H1 (cell line): ENCODE measurements at regions of chr19 and their contacts with region 1.

Region 1: GRCh38 chr19:12965017-12965811 is 4.2 kb upstream of the DAND5 start:
- DNase-seq: peak; percentile 59 to 97
- H3K4me3 ChIP-seq: peak overlapping the region in 3 of 4 experiments; percentile 27 to 54 (median 46); a peak in 5 of 8 replicates
- H3K27ac ChIP-seq: peak overlapping the region; percentile 34; the same call in 1 of the 2 replicates
- H3K4me1 ChIP-seq: peaks cover 0 to 6% (median 2%) of the 10 kb centered on the region in 4 experiments; a peak in 2 of 7 replicates
- H3K27me3 ChIP-seq: no peaks in the 10 kb centered on the region
- CTCF ChIP-seq: peak; percentile 92 to 99 (median 99)
- EP300 ChIP-seq: no peak
- POLR2A ChIP-seq: no peak; a peak in 1 of 3 replicates
- RAD21 ChIP-seq: peak; percentile 54 to 65

Region 2: DNA sequence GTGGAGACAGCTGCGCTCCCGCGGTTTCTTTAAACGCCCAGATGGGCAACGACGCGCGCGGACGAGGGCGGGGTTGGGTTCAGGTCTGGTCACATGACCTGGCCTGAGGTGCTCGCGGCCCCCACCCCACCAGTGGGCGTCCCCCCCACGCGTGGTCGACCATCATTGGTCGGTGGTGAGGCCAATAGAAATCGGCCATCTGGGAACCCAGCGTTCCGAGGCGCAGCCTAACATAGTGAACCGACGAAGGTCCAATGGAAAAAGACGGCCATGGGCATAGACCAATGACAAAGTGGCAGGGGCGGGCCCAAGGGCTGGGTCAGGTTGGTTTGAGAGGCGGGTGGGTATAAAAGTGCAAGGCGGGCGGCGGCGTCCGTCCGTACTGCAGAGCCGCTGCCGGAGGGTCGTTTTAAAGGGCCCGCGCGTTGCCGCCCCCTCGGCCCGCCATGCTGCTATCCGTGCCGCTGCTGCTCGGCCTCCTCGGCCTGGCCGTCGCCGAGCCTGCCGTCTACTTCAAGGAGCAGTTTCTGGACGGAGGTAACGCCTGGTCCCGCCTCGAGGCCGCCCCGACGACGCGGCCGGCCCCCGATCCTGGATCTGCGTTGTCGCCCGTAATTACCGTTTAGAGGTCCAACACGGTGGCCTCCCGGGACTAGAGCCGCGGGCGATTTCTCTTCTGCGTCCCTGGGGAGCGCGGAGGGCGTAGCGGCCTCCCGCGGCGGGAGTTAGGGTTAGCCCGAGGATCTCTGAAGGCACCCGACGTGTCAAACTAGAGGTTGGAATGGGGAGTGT is 26.8 kb before region 1 on chr19 and contains the start of gene CALR:
- CTCF ChIA-PET with region 1: interaction called, 9 read pairs
- POLR2A ChIA-PET with region 1: interaction called, 15 read pairs
- DNase-seq: peak; percentile 91 to 98
- H3K4me3 ChIP-seq: peak within 1 kb of the TSS; percentile 68 to 97 (median 93)
- H3K27ac ChIP-seq: peak within 1 kb of the TSS; percentile 32; the same call in 1 of the 2 replicates
- H3K4me1 ChIP-seq: peaks cover 0 to 23% (median 13%) of the 10 kb centered on the region in 4 experiments; a peak in 6 of 7 replicates
- H3K27me3 ChIP-seq: no peaks in the 10 kb centered on the region
- CTCF ChIP-seq: no peak
- EP300 ChIP-seq: no peak
- POLR2A ChIP-seq: peak; percentile 98 to 99
- RAD21 ChIP-seq: no peak
- total RNA-seq, gene CALR: 1,155 and 1,177 TPM in 2 replicates

Region 3: DNA sequence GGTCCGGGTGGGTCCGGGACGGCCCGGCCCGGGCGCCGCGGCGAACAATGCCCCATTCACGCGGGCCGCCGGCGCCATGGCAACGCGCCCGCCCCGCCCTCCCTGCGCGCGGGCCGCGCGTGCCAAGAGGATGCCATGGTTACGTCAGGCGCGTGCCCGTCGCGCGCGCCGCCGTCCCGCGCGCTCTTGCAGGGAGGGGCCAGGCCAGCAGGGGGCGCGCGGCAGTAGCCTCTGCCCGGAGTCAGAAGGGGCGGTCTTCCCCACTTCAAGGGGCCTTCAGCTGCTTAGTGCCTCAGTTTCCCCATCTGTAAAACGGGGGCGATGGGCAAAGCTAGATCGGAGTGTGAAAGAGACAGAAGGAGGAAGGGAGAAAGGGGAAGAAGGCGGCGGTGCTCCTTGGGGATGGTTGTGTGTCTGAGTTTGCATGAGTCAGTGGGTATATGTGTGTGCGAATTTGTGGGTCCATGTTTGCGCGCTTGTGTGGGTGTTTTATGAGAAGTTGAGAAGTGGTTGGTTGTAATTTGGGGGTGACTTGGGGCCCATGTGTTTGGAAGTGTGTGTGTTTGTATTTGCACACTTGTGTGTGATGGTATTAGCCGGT is 18.4 kb after region 1 on chr19:
- CTCF ChIA-PET with region 1: interaction called, 154 read pairs
- POLR2A ChIA-PET with region 1: interaction called, 3 read pairs
- DNase-seq: peak in 1 of 2 experiments; percentile 97
- H3K4me3 ChIP-seq: peak overlapping the region in 2 of 4 experiments; percentile 11 to 63; a peak in 3 of 8 replicates
- H3K27ac ChIP-seq: no peak overlapping the region
- H3K4me1 ChIP-seq: peaks cover 0 to 7% (median 3%) of the 10 kb centered on the region in 4 experiments; a peak in 4 of 7 replicates
- H3K27me3 ChIP-seq: peaks cover 2 to 41% (median 32%) of the 10 kb centered on the region in 4 experiments
- CTCF ChIP-seq: peak; percentile 87 to 89 (median 88)
- EP300 ChIP-seq: peak in 1 of 2 experiments; percentile 31; a peak in 1 of 3 replicates
- POLR2A ChIP-seq: no peak
- RAD21 ChIP-seq: peak; percentile 64 to 73

Region 4: GRCh38 chr19:13022111-13022858 is 57.1 kb after region 1 on chr19:
- CTCF ChIA-PET with region 1: no interaction called
- POLR2A ChIA-PET with region 1: no interaction called
- DNase-seq: no peak
- H3K4me3 ChIP-seq: peak overlapping the region in 1 of 4 experiments; percentile 46; a peak in 2 of 8 replicates
- H3K27ac ChIP-seq: no peak overlapping the region
- H3K4me1 ChIP-seq: peaks cover 11 to 40% (median 31%) of the 10 kb centered on the region in 4 experiments
- H3K27me3 ChIP-seq: peaks cover 79 to 98% (median 96%) of the 10 kb centered on the region in 4 experiments
- CTCF ChIP-seq: no peak
- EP300 ChIP-seq: no peak
- POLR2A ChIP-seq: no peak
- RAD21 ChIP-seq: no peak

Region 5: DNA sequence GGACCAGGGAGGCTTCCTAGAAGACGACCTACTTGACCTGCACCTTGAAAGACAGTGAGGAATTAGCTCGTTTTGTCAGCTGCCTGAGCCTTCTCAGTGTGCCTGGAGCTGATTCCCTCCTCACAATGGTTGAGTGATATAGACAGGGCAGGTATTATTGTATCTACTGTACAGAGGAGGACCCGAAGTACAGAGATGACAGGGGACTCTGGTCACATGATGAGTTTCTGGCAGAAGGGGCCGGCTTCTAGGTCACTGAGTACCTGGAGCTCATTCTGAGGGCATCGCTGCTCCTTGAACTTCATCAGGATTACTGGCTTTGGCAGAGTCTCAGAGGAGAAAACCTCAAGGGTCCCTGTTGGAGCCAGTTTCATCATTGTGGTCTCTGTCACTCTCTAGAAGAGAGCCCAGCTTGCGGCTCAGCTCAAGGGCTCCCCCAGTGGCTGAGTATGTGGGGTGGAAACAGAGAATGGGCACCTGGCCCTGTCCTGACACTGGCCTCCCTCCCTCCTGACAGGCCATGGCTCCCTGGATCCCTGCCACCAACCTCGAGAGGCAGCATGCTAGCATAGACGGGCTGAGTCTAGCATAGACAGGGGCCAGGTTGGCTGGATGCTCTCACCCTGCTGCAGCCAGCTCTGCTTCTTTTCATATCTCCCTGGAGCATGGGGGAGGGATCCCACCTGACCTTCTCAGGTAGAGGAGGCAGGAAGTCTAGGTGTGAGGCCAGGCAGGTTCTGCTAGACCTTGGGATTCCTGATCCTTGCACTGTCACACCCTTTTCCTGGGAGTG is 68.8 kb after region 1 on chr19:
- CTCF ChIA-PET with region 1: interaction called, 10 read pairs
- POLR2A ChIA-PET with region 1: no interaction called
- DNase-seq: peak in 1 of 2 experiments; percentile 86
- H3K4me3 ChIP-seq: no peak overlapping the region
- H3K27ac ChIP-seq: no peak overlapping the region
- H3K4me1 ChIP-seq: no peaks in the 10 kb centered on the region
- H3K27me3 ChIP-seq: peaks cover 10 to 67% (median 42%) of the 10 kb centered on the region in 4 experiments
- CTCF ChIP-seq: peak; percentile 86 to 95 (median 93)
- EP300 ChIP-seq: no peak
- POLR2A ChIP-seq: no peak
- RAD21 ChIP-seq: peak; percentile 59 to 74; a peak in 3 of 4 replicates

Region 6: GRCh38 chr19:13060964-13061927 is 96.0 kb after region 1 on chr19:
- CTCF ChIA-PET with region 1: interaction called, 41 read pairs
- POLR2A ChIA-PET with region 1: interaction called, 4 read pairs
- DNase-seq: peak in 1 of 2 experiments; percentile 97
- H3K4me3 ChIP-seq: peak overlapping the region; percentile 17 to 60 (median 46); a peak in 7 of 8 replicates
- H3K27ac ChIP-seq: no peak overlapping the region
- H3K4me1 ChIP-seq: peaks cover 0 to 14% (median 9%) of the 10 kb centered on the region in 4 experiments; a peak in 6 of 7 replicates
- H3K27me3 ChIP-seq: peaks cover 56 to 76% (median 72%) of the 10 kb centered on the region in 4 experiments
- CTCF ChIP-seq: peak; percentile 95 to 98 (median 95)
- EP300 ChIP-seq: peak in 1 of 2 experiments; percentile 46; a peak in 1 of 3 replicates
- POLR2A ChIP-seq: no peak
- RAD21 ChIP-seq: peak; percentile 82 to 91

Region 7: GRCh38 chr19:13099073-13099999 is 134.1 kb after region 1 on chr19:
- CTCF ChIA-PET with region 1: interaction called, 78 read pairs
- POLR2A ChIA-PET with region 1: interaction called, 8 read pairs
- DNase-seq: peak in 1 of 2 experiments; percentile 74
- H3K4me3 ChIP-seq: peak overlapping the region in 3 of 4 experiments; percentile 1 to 50 (median 12); a peak in 6 of 8 replicates
- H3K27ac ChIP-seq: no peak overlapping the region
- H3K4me1 ChIP-seq: peaks cover 0 to 28% (median 13%) of the 10 kb centered on the region in 4 experiments; a peak in 5 of 7 replicates
- H3K27me3 ChIP-seq: peaks cover 33 to 80% (median 67%) of the 10 kb centered on the region in 4 experiments
- CTCF ChIP-seq: no peak
- EP300 ChIP-seq: no peak
- POLR2A ChIP-seq: no peak
- RAD21 ChIP-seq: no peak